ENCODE measurements at regions of chr20 and their contacts with region 1.

Region 1: GRCh38 chr20:9532069-9532838 is 17.9 kb downstream of the LAMP5 start:
- DNase-seq: peak; percentile 19
- H3K4me3 ChIP-seq: no peak overlapping the region
- H3K27ac ChIP-seq: no peak overlapping the region
- H3K4me1 ChIP-seq: peaks cover 10% of the 10 kb centered on the region
- H3K27me3 ChIP-seq: no peaks in the 10 kb centered on the region
- CTCF ChIP-seq: no peak

Region 2: DNA sequence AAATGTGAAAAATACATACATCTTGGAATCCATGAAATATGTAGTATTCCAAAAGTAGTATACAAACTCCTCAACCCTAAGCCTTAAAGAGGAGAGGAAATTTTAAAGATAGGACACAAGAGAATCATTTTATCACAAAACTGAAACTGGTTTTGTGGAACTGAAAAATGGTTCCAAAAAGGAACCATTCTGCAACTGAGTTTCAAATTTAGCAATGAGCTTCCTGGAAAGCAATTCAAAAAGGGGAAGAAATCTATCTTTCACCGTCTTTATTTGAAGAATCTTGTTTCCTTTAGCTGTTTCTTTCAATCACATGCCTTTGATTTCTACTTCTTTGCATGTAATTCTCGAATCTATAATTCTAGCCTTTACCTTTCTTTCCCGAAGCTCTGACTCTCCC is 50.1 kb before region 1 on chr20:
- CTCF ChIA-PET with region 1: no interaction called
- dilution Hi-C with region 1: loop called (anchors 5 kb)
- in situ Hi-C with region 1: no loop called
- intact Hi-C with region 1: no loop called
- DNase-seq: no peak
- H3K4me3 ChIP-seq: no peak overlapping the region
- H3K27ac ChIP-seq: no peak overlapping the region
- H3K4me1 ChIP-seq: no peaks in the 10 kb centered on the region
- H3K27me3 ChIP-seq: no peaks in the 10 kb centered on the region
- CTCF ChIP-seq: no peak

Region 3: DNA sequence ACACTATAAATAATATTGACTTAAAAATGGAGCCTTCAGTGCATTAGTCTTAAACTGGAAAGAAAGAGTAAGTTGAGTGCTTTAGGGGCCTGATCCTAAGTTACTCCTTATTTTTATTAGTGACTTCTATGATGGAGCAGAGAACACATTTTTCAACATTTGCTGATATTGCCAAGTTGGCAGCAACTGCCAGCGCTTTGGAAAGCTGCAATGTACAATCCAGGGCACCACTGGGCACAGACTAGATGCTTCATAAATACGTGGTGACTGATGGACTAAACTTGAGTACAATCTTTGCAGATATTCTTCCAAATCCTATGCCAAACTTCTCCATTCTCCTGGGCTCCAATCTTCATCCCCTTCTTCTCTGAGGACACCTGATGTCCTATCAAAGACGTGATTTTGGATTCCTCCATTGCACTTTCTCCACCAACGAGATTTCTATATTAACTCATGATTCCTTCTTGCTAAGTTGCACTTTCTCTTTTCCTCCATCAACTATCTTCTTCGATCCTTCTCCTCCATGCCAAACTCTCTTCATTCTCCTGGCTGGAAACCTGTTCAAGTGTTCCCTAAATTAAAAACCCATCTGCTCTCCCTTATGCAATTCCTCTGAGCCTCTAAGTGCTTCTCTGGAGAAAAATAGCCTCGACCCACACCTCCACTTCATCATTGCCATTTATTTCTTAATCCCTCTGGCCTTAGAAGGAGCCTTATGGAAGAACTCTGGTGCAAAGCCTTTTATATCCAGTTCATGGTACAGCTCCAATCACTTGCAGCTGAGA is 335.1 kb after region 1 on chr20:
- CTCF ChIA-PET with region 1: no interaction called
- dilution Hi-C with region 1: no loop called
- in situ Hi-C with region 1: no loop called
- intact Hi-C with region 1: no loop called
- DNase-seq: no peak
- H3K4me3 ChIP-seq: no peak overlapping the region
- H3K27ac ChIP-seq: no peak overlapping the region
- H3K4me1 ChIP-seq: no peaks in the 10 kb centered on the region
- H3K27me3 ChIP-seq: no peaks in the 10 kb centered on the region
- CTCF ChIP-seq: no peak